T-cell (primary cell): ENCODE measurements at regions of chr11 and their contacts with region 1.

Region 1: DNA sequence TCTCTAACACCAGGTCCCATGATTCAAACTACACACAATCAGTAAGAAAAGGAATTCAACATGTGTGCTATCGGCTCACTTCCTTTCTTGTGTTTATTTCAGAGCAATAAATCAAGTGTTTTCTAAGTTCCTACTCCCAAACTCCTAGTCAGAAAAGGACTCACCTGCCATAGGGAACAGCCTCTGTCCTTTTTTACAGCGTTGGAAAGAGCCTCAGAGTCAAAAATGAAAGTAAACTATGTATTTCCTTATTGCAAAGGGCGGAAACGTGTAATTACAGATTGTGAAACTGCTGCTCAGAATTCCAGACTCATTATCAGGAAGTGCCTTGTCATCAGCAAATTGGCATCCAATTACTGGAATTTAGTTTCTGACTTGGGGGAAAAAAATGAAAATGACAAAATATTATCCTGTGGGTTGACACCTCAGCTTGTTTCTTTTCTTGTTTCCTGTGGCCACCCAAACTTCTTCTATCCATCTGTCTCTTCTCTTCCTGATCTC is at the start of gene CASP4:
- DNase-seq: peak in 3 of 35 experiments; percentile 2 to 66 (median 26)
- ATAC-seq: peak; percentile 52 to 88 (median 78)
- H3K4me3 ChIP-seq: peak within 1 kb of the TSS; percentile 74 to 90
- H3K4me3 Mint-ChIP-seq: peak within 1 kb of the TSS; percentile 90 to 94 (median 92)
- H3K27ac ChIP-seq: peak within 1 kb of the TSS; percentile 87
- H3K27ac Mint-ChIP-seq: peak within 1 kb of the TSS; percentile 96 to 99
- H3K4me1 ChIP-seq: peaks cover 21 to 24% of the 10 kb centered on the region in 2 experiments
- H3K4me1 Mint-ChIP-seq: peaks cover 35 to 46% (median 42%) of the 10 kb centered on the region in 3 donors
- H3K27me3 ChIP-seq: no peaks in the 10 kb centered on the region
- H3K27me3 Mint-ChIP-seq: no peaks in the 10 kb centered on the region
- total RNA-seq, gene CASP4: 70.3 to 95.8 (median 80.2) TPM

Region 2: DNA sequence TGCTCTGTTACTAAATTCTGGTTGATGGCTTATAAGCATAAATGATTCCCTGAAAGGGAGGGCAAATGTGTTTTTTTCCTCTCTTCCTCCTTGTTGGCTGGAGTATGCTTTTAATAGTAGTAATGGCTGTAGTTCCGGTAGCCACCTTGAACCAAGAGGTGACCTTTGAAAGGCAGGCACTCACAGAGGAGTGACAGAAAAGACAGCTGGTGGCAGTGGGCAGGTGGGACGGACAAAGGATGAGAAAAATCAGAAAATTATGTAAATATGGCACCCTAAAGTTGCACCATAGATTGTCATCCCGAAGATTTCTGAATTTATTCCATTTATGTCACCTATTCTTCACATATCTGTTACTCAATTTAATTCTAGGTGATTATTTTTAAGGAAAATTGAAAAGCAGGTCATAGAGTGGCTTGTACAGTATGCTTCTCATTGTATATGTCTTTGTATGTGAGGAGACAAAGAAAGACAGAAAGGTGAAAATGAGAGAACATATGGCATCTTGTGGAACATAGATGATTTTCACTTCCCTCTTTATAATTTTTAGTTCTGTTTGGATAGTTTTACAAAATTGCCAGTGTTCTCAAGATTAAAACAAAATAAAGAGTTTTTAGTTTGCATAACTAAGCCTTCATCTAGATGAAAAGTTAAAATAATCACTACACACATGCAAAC is 87.1 kb before region 1 on chr11:
- CTCF ChIA-PET with region 1: no interaction called
- POLR2A ChIA-PET with region 1: no interaction called
- DNase-seq: no peak
- ATAC-seq: no peak
- H3K4me3 ChIP-seq: no peak overlapping the region
- H3K4me3 Mint-ChIP-seq: no peak overlapping the region
- H3K27ac ChIP-seq: no peak overlapping the region
- H3K27ac Mint-ChIP-seq: no peak overlapping the region
- H3K4me1 ChIP-seq: peaks cover 7 to 14% of the 10 kb centered on the region in 2 experiments
- H3K4me1 Mint-ChIP-seq: peaks cover 25 to 50% (median 48%) of the 10 kb centered on the region in 3 donors
- H3K27me3 ChIP-seq: no peaks in the 10 kb centered on the region
- H3K27me3 Mint-ChIP-seq: no peaks in the 10 kb centered on the region

Region 3: GRCh38 chr11:104979849-104980248 is 11.4 kb after region 1 on chr11:
- CTCF ChIA-PET with region 1: interaction called in 1 of 2 experiments, 10 read pairs
- POLR2A ChIA-PET with region 1: no interaction called
- DNase-seq: no peak
- ATAC-seq: no peak
- H3K4me3 ChIP-seq: no peak overlapping the region
- H3K4me3 Mint-ChIP-seq: no peak overlapping the region
- H3K27ac ChIP-seq: no peak overlapping the region
- H3K27ac Mint-ChIP-seq: no peak overlapping the region
- H3K4me1 ChIP-seq: no peaks in the 10 kb centered on the region
- H3K4me1 Mint-ChIP-seq: no peaks in the 10 kb centered on the region
- H3K27me3 ChIP-seq: no peaks in the 10 kb centered on the region
- H3K27me3 Mint-ChIP-seq: no peaks in the 10 kb centered on the region

Region 4: GRCh38 chr11:105520706-105521345 is 552.4 kb after region 1 on chr11:
- CTCF ChIA-PET with region 1: no interaction called
- POLR2A ChIA-PET with region 1: no interaction called
- DNase-seq: no peak
- ATAC-seq: no peak
- H3K4me3 ChIP-seq: no peak overlapping the region
- H3K4me3 Mint-ChIP-seq: no peak overlapping the region
- H3K27ac ChIP-seq: no peak overlapping the region
- H3K27ac Mint-ChIP-seq: no peak overlapping the region
- H3K4me1 ChIP-seq: no peaks in the 10 kb centered on the region
- H3K4me1 Mint-ChIP-seq: no peaks in the 10 kb centered on the region
- H3K27me3 ChIP-seq: no peaks in the 10 kb centered on the region
- H3K27me3 Mint-ChIP-seq: peaks cover 0 to 2% of the 10 kb centered on the region in 2 donors